Endothelial cell of umbilical vein (primary cell): ENCODE measurements at regions of chr7 and their contacts with region 1.

Region 1: DNA sequence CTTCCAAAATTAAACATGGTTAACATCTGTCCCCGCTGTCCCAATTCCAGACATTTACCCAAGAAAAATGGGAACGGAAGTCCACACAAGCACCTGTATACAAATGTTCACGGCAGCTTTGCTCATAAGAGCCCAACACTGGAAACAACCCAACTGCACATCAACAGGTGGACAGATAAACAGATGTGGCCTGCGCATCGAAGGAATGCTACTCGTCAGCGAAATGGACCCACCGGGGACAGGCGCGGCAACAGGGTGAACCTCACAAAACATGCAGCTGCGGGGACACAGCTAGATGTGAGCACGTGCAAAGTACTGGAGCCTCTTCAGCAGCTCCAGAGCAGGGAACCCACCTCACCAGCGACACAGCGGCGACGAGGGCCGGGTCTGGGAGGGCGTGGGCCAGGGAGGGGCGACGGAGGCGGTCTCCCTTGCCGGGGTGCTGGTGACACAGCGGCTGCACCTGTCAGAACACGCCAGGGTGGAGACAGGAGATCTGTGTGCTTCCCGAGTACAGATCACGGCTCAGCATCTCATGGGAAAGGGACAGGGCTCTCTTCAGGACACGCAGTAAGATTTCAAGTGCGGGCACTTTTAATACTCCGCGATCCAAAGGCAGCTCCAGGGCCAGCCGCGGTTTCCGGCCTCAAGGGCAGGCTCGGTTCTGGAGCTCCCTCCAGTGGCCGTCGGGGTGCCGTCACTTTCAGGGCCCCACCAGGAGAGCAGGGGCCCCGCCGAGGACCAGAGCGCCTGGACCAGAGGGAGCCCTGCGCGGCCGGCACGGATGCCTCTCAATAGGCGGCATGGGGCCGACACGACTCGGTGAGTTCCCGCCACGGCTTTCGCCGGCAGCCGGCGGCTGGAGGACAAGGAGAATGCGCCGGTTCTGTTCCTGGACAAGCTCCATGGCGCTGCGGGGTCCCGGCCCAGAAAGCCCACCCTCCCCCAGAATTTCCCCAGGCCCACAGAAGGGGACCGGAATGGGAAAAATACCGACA is 21.2 kb downstream of the GPR146 start:
- DNase-seq: peak; percentile 65
- H3K4me3 ChIP-seq: no peak overlapping the region
- H3K27ac ChIP-seq: no peak overlapping the region
- H3K4me1 ChIP-seq: peaks cover 6% of the 10 kb centered on the region
- H3K27me3 ChIP-seq: no peaks in the 10 kb centered on the region
- CTCF ChIP-seq: peak; percentile 91 to 98
- POLR2A ChIP-seq: no peak

Region 2: GRCh38 chr7:424961-425793 is 640.4 kb before region 1 on chr7:
- CTCF ChIA-PET with region 1: no interaction called
- POLR2A ChIA-PET with region 1: no interaction called
- dilution Hi-C with region 1: no loop called
- intact Hi-C with region 1: no loop called
- DNase-seq: no peak
- H3K4me3 ChIP-seq: no peak overlapping the region
- H3K27ac ChIP-seq: no peak overlapping the region
- H3K4me1 ChIP-seq: no peaks in the 10 kb centered on the region
- H3K27me3 ChIP-seq: no peaks in the 10 kb centered on the region
- CTCF ChIP-seq: no peak
- POLR2A ChIP-seq: no peak

Region 3: DNA sequence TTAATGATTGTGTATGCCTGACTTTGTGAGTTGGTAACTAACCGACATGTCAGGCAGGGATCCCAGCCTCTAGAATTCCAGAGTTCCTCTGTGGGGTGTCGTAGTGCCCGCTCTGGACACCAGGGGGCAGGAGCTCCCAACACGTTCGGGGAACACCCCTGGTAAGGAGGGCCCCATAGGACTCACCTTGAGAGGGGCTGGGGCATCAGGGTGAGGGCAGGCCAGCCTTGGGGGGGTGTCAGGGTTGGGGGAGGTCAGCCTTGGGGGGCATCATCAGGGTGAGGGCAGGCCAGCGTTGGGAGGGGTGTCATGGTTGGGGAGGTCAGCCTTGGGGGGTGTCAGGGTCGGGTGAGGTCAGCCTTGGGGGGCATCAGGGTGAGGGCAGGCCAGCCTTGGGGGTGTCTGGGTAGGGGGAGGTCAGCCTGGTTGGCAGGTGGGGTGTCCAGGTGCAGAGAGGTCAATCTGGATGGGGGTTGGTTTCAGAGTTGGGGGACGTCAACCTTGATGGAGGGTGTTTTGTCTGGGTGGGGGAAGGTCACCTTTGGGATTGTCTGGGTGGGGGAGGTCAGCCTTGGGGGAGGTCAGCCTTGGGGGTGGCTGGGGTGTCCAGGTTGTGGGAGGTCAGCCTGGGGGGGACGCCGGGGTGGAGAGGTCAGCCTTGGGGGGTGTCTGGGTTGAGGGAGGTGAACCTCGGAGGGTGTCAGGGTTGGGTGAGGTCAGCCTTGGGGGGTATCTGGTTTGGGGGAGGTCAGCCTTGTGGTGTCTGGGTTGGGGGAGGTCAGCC is 278.9 kb before region 1 on chr7:
- CTCF ChIA-PET with region 1: interaction called, 3 read pairs
- POLR2A ChIA-PET with region 1: no interaction called
- dilution Hi-C with region 1: no loop called
- intact Hi-C with region 1: loop called (anchors 1 kb)
- DNase-seq: peak; percentile 57
- H3K4me3 ChIP-seq: no peak overlapping the region
- H3K27ac ChIP-seq: no peak overlapping the region
- H3K4me1 ChIP-seq: no peaks in the 10 kb centered on the region
- H3K27me3 ChIP-seq: no peaks in the 10 kb centered on the region
- CTCF ChIP-seq: peak; percentile 83 to 84
- POLR2A ChIP-seq: no peak

Region 4: GRCh38 chr7:1012004-1012715 is 53.4 kb before region 1 on chr7:
- CTCF ChIA-PET with region 1: interaction called, 10 read pairs
- POLR2A ChIA-PET with region 1: no interaction called
- dilution Hi-C with region 1: no loop called
- intact Hi-C with region 1: no loop called
- DNase-seq: no peak
- H3K4me3 ChIP-seq: no peak overlapping the region
- H3K27ac ChIP-seq: no peak overlapping the region
- H3K4me1 ChIP-seq: no peaks in the 10 kb centered on the region
- H3K27me3 ChIP-seq: no peaks in the 10 kb centered on the region
- CTCF ChIP-seq: no peak
- POLR2A ChIP-seq: no peak

Region 5: GRCh38 chr7:1028031-1028770 is 37.4 kb before region 1 on chr7:
- CTCF ChIA-PET with region 1: interaction called, 35 read pairs
- POLR2A ChIA-PET with region 1: no interaction called
- dilution Hi-C with region 1: no loop called
- intact Hi-C with region 1: loop called (anchors 1 kb)
- DNase-seq: peak; percentile 88
- H3K4me3 ChIP-seq: peak overlapping the region; percentile 5 to 80 (median 51)
- H3K27ac ChIP-seq: peak overlapping the region; percentile 31
- H3K4me1 ChIP-seq: peaks cover 8% of the 10 kb centered on the region
- H3K27me3 ChIP-seq: no peaks in the 10 kb centered on the region
- CTCF ChIP-seq: no peak
- POLR2A ChIP-seq: peak; percentile 34

Region 6: DNA sequence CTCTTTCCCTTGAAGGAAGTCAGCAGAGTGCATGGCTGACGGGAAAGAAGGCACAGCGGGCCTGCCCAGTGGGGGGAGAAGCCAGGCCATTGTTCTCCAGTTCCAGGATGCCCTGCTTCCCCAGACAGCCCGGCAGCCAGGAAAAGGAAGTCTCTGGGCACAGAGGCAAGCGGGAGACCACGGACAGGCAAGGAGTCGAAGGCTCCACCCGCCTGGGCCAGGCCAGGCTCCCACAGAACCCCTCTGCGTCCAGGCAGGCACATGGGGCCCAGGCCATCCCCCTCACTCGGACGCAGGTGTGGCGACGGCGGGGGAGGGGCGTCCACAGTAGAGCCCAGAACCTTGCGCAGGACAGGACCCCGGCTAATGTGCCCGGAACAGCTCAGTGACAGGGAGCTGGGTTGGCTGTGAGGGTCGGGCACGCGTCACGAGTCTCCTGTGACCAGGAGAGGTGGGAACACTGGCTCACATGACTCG is 12.5 kb before region 1 on chr7:
- CTCF ChIA-PET with region 1: interaction called, 26 read pairs
- POLR2A ChIA-PET with region 1: no interaction called
- dilution Hi-C with region 1: no loop called
- intact Hi-C with region 1: no loop called
- DNase-seq: peak; percentile 83
- H3K4me3 ChIP-seq: no peak overlapping the region
- H3K27ac ChIP-seq: peak overlapping the region; percentile 86
- H3K4me1 ChIP-seq: peaks cover 58% of the 10 kb centered on the region
- H3K27me3 ChIP-seq: no peaks in the 10 kb centered on the region
- CTCF ChIP-seq: no peak
- POLR2A ChIP-seq: no peak

Region 7: DNA sequence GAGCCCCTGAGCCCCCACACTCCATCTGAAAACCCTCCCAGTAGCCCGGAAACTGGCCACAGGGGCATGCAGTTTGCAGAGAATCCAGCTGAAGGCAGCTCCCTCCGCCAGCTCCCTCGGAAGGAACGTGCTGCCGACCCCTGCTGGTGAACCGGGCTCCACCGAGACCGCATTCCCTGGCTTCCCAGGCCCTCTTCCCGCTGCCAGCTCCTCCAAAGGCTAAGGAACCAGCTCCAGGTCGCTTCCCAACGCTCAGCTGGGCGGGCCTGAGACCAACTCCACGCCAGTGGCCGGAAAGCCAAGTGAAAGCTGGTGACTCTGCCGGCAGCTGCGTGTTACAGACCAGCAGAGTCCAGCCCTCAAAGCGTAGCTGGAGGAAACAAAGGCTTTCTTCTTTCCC is 58.2 kb after region 1 on chr7:
- CTCF ChIA-PET with region 1: interaction called, 31 read pairs
- POLR2A ChIA-PET with region 1: no interaction called
- dilution Hi-C with region 1: no loop called
- intact Hi-C with region 1: no loop called
- DNase-seq: peak; percentile 94
- H3K4me3 ChIP-seq: no peak overlapping the region
- H3K27ac ChIP-seq: peak overlapping the region; percentile 75
- H3K4me1 ChIP-seq: peaks cover 12% of the 10 kb centered on the region
- H3K27me3 ChIP-seq: no peaks in the 10 kb centered on the region
- CTCF ChIP-seq: peak; percentile 78 to 93
- POLR2A ChIP-seq: peak; percentile 38